Thyroid gland (tissue), 4 donors: ENCODE measurements at regions of chr1 and their contacts with region 1.

Region 1: DNA sequence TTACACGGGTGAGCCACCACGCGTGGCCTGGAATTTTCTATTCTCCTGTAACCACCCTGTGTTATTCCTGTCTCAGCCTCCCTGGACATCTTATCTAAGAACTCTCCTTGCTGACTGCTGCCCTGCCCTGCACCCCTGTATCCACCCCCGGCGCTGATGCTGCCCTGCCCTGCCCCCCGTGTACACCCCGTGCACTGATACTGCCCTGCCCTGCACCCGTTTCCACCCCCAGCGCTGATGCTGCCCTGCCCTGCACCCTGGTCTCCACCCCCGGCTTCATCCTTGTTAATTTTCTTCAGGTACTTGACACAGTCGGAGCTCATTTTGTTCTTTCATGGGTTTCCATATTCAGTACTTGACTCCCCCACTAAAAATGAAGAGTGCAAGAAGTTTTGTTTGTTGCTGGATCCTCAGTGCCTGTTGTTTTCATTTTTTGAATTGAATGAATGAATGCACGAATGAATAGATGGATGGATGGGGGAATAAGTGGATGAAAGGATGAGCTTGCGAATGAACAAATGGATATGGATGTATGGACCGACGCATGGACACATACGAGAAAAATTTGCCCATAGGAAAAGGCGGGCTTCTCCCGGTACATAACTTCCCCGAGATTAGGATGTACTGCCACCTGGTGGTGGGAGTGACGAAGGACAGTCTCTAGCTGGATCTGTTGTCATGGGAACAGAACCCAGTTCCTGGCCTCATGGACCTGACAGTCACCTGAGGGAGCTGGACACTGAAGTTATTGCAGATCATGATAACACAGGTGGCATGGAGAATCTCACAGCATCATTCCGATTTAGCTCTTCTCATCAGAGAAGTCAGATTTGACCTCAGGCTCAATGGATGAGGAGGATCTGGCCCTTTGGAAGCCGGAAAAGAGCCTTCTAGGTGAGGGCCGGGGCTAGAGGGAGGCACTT is 14.9 kb downstream of the AADACL4 start:
- DNase-seq: peak; percentile 69 to 73
- H3K4me3 ChIP-seq: no peak overlapping the region
- H3K27ac ChIP-seq: no peak overlapping the region
- H3K4me1 ChIP-seq: no peaks in the 10 kb centered on the region
- H3K27me3 ChIP-seq: no peaks in the 10 kb centered on the region
- CTCF ChIP-seq: peak; percentile 87 to 99 (median 93)
- POLR2A ChIP-seq: no peak

Region 2: GRCh38 chr1:12272770-12273169 is 386.0 kb before region 1 on chr1:
- intact Hi-C with region 1: loop called (anchors 2 kb)
- DNase-seq: no peak
- H3K4me3 ChIP-seq: no peak overlapping the region
- H3K27ac ChIP-seq: no peak overlapping the region
- H3K4me1 ChIP-seq: no peaks in the 10 kb centered on the region
- H3K27me3 ChIP-seq: no peaks in the 10 kb centered on the region
- CTCF ChIP-seq: no peak
- POLR2A ChIP-seq: no peak

Region 3: GRCh38 chr1:12760256-12760795 is 101.5 kb after region 1 on chr1:
- intact Hi-C with region 1: no loop called
- DNase-seq: no peak
- H3K4me3 ChIP-seq: no peak overlapping the region
- H3K27ac ChIP-seq: no peak overlapping the region
- H3K4me1 ChIP-seq: no peaks in the 10 kb centered on the region
- H3K27me3 ChIP-seq: no peaks in the 10 kb centered on the region
- CTCF ChIP-seq: no peak
- POLR2A ChIP-seq: no peak